A673 (cell line): ENCODE measurements at regions of chr18 and their contacts with region 1.

Region 1: DNA sequence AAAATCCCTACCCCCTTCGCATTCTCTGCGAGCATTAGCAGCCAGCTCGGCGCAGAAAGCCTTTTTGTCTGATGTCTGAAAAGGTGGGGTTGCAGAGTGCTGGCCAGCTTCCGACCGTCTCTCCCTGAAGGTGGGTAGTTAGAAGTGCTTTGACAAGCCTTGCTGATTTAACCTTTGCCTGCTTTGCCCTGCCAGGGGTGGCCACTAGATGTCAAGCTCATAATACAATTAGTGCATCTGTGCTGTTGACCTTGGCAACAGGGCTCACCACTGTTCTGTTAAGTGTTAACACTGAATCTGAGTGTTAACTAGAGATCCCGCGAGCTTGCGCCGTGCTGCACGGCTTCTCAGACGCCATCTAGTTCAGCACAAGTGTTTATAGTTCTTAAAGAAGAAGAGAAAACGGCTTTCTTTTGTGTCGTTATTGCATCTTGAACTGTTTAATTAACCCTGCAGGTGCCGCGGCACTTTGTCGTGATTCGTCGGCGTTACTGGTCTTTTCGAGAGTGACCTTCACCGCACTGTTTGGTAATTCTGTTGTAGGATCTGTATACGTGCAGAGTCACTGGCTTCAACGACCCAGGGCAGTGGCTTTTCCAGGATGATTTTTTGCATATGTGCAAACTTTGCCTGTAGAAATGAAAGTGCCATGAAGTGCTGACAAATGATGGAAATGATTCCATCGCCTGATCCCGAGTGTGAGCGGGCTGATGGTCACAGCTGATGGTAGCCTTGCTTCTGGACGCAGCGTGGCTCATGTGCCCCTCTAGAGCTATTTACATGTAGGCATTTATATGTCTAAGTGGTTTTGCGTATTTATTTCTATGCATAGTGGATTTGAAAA is 5.5 kb downstream of the SALL3 start:
- DNase-seq: no peak
- H3K4me3 ChIP-seq: no peak overlapping the region
- H3K27ac ChIP-seq: no peak overlapping the region
- H3K4me1 ChIP-seq: no peaks in the 10 kb centered on the region
- H3K27me3 ChIP-seq: peaks cover 100% of the 10 kb centered on the region
- CTCF ChIP-seq: no peak

Region 2: GRCh38 chr18:77000527-77000926 is 1984.6 kb before region 1 on chr18:
- CTCF ChIA-PET with region 1: no interaction called
- POLR2A ChIA-PET with region 1: no interaction called
- intact Hi-C with region 1: loop called (anchors 5 kb)
- DNase-seq: peak; percentile 41
- H3K4me3 ChIP-seq: no peak overlapping the region
- H3K27ac ChIP-seq: no peak overlapping the region
- H3K4me1 ChIP-seq: no peaks in the 10 kb centered on the region
- H3K27me3 ChIP-seq: peaks cover 43% of the 10 kb centered on the region
- CTCF ChIP-seq: peak; percentile 99

Region 3: DNA sequence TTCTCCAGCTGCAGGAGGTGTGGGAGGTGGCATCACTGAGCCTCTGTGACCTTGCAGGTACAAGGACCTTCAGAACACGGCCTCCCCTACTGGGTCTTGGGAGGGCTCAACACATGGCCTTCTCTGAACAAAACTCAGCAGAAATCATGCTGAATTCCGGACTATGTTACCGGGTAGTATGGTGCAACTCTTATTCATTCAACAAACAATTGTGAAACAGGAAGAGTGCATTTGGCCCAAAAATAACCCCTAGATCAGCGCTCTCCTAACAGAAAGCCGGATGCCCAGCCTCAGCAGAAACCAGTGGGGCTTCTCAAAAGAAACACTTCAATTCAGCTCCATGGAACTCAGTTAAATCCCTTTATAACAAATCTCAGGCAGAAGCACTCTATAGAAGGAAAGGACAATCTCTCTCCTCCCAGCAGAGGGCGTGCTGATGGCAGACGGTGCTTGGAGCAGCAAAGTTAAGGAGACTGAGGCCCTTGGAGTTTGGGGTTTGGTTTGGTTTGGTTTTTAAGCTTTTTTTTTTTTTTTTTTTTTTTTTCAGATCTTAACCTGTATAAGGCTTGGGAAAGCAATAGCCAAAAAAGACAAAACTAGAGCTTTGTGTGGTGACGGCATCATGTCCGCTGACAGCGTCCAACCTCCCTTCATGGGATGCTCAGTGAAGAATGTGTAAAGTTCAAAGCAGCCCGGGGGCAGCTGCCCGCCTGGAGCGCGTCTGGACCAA is 109.7 kb before region 1 on chr18:
- CTCF ChIA-PET with region 1: interaction called, 4 read pairs
- POLR2A ChIA-PET with region 1: no interaction called
- intact Hi-C with region 1: loop called (anchors 1 kb)
- DNase-seq: peak; percentile 58
- H3K4me3 ChIP-seq: no peak overlapping the region
- H3K27ac ChIP-seq: no peak overlapping the region
- H3K4me1 ChIP-seq: no peaks in the 10 kb centered on the region
- H3K27me3 ChIP-seq: peaks cover 58% of the 10 kb centered on the region
- CTCF ChIP-seq: peak; percentile 80

Region 4: DNA sequence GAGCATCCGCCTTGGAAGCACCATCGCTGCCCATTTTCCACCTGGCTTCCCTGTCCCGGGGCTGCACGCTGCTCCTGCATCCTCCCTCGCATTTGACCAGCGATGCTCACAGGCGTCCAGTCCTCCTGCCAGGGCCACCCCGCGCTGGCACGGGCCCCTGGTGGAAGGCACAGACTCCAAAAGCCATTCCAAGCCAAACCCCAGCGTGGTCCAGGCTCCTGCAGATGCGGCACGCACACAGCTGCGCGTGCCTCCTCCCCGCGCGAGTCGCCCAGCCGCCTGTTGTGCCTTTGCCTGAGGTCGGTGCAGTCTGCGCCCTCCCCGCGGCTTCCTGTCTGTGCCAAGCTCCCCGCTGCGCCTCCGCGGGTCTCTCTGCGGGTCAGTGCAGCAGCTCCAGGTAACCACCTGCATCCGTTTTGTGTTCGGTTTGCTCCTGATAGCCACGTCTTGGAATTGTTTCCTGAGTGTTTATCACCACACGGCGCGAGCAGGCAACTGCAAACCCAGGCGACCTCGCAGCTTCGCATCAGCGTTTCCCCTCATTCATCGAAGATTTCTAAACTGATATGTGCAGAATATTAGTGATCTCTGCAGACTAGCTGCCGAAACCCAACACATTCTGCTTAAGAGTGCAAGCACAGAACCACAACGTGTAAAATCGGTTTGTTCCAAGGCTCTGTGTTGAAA is 70.8 kb before region 1 on chr18:
- CTCF ChIA-PET with region 1: no interaction called
- POLR2A ChIA-PET with region 1: no interaction called
- intact Hi-C with region 1: no loop called
- DNase-seq: no peak
- H3K4me3 ChIP-seq: no peak overlapping the region
- H3K27ac ChIP-seq: no peak overlapping the region
- H3K4me1 ChIP-seq: no peaks in the 10 kb centered on the region
- H3K27me3 ChIP-seq: peaks cover 1% of the 10 kb centered on the region
- CTCF ChIP-seq: no peak

Region 5: GRCh38 chr18:79019881-79020280 is 34.7 kb after region 1 on chr18:
- CTCF ChIA-PET with region 1: no interaction called
- POLR2A ChIA-PET with region 1: no interaction called
- intact Hi-C with region 1: no loop called
- DNase-seq: no peak
- H3K4me3 ChIP-seq: no peak overlapping the region
- H3K27ac ChIP-seq: no peak overlapping the region
- H3K4me1 ChIP-seq: no peaks in the 10 kb centered on the region
- H3K27me3 ChIP-seq: peaks cover 21% of the 10 kb centered on the region
- CTCF ChIP-seq: no peak

Region 6: GRCh38 chr18:79246348-79247108 is 261.4 kb after region 1 on chr18:
- CTCF ChIA-PET with region 1: no interaction called
- POLR2A ChIA-PET with region 1: no interaction called
- intact Hi-C with region 1: loop called (anchors 10 kb)
- DNase-seq: peak; percentile 84
- H3K4me3 ChIP-seq: no peak overlapping the region
- H3K27ac ChIP-seq: no peak overlapping the region
- H3K4me1 ChIP-seq: peaks cover 21% of the 10 kb centered on the region
- H3K27me3 ChIP-seq: peaks cover 30% of the 10 kb centered on the region
- CTCF ChIP-seq: peak; percentile 99